HCT116 (cell line): ENCODE measurements at regions of chr1 and their contacts with region 1.

Region 1: DNA sequence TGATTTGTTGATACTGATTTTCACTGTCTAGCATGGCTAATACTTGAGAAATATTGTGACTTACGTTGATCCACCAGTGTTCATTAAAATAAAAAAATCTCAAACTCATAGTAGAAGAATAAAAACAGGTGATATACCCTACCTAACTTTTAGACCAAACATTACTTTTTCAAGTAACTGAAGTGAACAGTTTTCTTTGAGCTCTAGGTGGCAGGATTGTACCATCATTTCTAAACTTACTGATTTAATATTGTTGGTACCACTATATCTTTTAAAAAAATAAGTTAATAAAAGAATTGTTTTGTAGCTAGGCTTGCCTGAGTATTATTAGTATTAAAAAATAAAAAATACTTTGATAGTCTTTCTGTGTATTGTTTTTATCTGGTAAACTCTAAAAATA is 21.5 kb downstream of the CDC73 start:
- DNase-seq: no peak
- ATAC-seq: 0 out of 2 replicates have a peak, but pooled peaks have one; percentile 46
- H3K4me3 ChIP-seq: no peak overlapping the region
- H3K27ac ChIP-seq: no peak overlapping the region
- H3K4me1 ChIP-seq: no peaks in the 10 kb centered on the region
- H3K27me3 ChIP-seq: no peaks in the 10 kb centered on the region
- CTCF ChIP-seq: peak; percentile 22 to 46 (median 26); a peak in 2 of 6 replicates
- POLR2A ChIP-seq: no peak
- RAD21 ChIP-seq: peak; percentile 59

Region 2: GRCh38 chr1:192747942-192748341 is 395.3 kb before region 1 on chr1:
- CTCF ChIA-PET with region 1: no interaction called
- POLR2A ChIA-PET with region 1: no interaction called
- RAD21 ChIA-PET with region 1: no interaction called
- intact Hi-C with region 1: no loop called
- DNase-seq: no peak
- ATAC-seq: no peak
- H3K4me3 ChIP-seq: no peak overlapping the region
- H3K27ac ChIP-seq: no peak overlapping the region
- H3K4me1 ChIP-seq: no peaks in the 10 kb centered on the region
- H3K27me3 ChIP-seq: no peaks in the 10 kb centered on the region
- CTCF ChIP-seq: no peak
- POLR2A ChIP-seq: no peak
- RAD21 ChIP-seq: no peak

Region 3: DNA sequence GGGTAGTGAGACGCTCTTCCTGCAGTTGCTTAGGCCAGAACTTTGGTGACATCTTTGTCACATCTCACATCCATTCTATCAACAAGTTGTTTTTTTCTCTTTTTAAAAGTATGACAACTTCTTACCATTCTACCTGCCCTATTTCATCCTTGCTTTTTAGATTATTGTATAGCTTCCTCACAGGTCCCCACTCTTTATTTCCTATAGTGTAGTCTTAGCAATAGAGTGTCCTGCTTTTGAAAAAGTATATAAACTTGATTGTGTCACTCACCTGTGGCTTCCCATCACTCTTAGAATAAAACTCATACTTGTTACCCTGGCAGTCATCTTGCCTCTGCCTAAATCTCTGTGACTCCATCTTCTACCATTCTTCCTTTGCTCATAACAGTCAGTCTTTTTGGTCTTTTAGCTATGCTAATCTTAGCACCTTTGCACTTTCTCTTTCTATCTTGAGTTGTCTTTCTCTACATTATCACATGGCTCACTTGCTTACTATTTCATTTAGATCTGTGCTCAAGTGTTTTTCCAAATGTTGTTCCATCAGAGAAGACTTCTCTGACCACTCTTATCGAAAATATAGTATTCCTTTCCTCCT is 11.9 kb before region 1 on chr1:
- CTCF ChIA-PET with region 1: interaction called, 13 read pairs
- POLR2A ChIA-PET with region 1: interaction called, 3 read pairs
- RAD21 ChIA-PET with region 1: no interaction called
- intact Hi-C with region 1: no loop called
- DNase-seq: no peak
- ATAC-seq: no peak
- H3K4me3 ChIP-seq: no peak overlapping the region
- H3K27ac ChIP-seq: no peak overlapping the region
- H3K4me1 ChIP-seq: peaks cover 13 to 22% of the 10 kb centered on the region in 2 experiments
- H3K27me3 ChIP-seq: no peaks in the 10 kb centered on the region
- CTCF ChIP-seq: no peak
- POLR2A ChIP-seq: no peak
- RAD21 ChIP-seq: no peak

Region 4: DNA sequence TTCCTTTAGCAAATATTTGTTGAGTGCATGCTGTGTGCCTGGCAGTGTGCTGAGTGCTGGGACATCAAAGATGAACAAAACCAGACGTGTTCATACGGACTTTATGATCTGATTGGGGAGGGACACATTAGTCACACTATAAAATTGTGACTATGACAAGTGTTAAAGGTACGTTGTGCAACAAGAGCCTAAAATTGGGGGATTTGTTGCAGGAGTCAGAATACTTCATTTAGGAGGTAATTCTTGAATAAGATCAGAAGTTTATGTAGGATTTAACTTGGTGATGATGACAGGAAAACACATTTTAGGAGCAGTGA is 13.5 kb after region 1 on chr1:
- CTCF ChIA-PET with region 1: interaction called, 14 read pairs
- POLR2A ChIA-PET with region 1: no interaction called
- RAD21 ChIA-PET with region 1: no interaction called
- intact Hi-C with region 1: no loop called
- DNase-seq: no peak
- ATAC-seq: peak; percentile 67
- H3K4me3 ChIP-seq: no peak overlapping the region
- H3K27ac ChIP-seq: no peak overlapping the region
- H3K4me1 ChIP-seq: peaks cover 0 to 11% of the 10 kb centered on the region in 2 experiments; a peak in 2 of 4 replicates
- H3K27me3 ChIP-seq: no peaks in the 10 kb centered on the region
- CTCF ChIP-seq: no peak
- POLR2A ChIP-seq: no peak
- RAD21 ChIP-seq: no peak